CD8-positive, alpha-beta T cell (primary cell): ENCODE measurements at regions of chr12 and their contacts with region 1.

Region 1: GRCh38 chr12:2783936-2784600 is 10.7 kb upstream of the FKBP4 start:
- DNase-seq: peak in 8 of 9 experiments; percentile 29 to 73 (median 54)
- ATAC-seq: peak; percentile 87
- H3K4me3 ChIP-seq: peak overlapping the region; percentile 16
- H3K4me3 Mint-ChIP-seq: peak overlapping the region; percentile 79
- H3K27ac ChIP-seq: no peak overlapping the region
- H3K27ac Mint-ChIP-seq: no peak overlapping the region
- H3K4me1 ChIP-seq: no peaks in the 10 kb centered on the region
- H3K4me1 Mint-ChIP-seq: peaks cover 11% of the 10 kb centered on the region
- H3K27me3 ChIP-seq: peaks cover 0 to 3% of the 10 kb centered on the region in 2 experiments
- H3K27me3 Mint-ChIP-seq: peaks cover 18% of the 10 kb centered on the region
- CTCF ChIP-seq: peak; percentile 97

Region 2: GRCh38 chr12:2248901-2249381 is 535.1 kb before region 1 on chr12:
- CTCF ChIA-PET with region 1: no interaction called
- POLR2A ChIA-PET with region 1: no interaction called
- intact Hi-C with region 1: no loop called
- DNase-seq: peak in 2 of 9 experiments; percentile 14 to 19
- ATAC-seq: no peak
- H3K4me3 ChIP-seq: no peak overlapping the region
- H3K4me3 Mint-ChIP-seq: no peak overlapping the region
- H3K27ac ChIP-seq: no peak overlapping the region
- H3K27ac Mint-ChIP-seq: no peak overlapping the region
- H3K4me1 ChIP-seq: no peaks in the 10 kb centered on the region
- H3K4me1 Mint-ChIP-seq: no peaks in the 10 kb centered on the region
- H3K27me3 ChIP-seq: no peaks in the 10 kb centered on the region
- H3K27me3 Mint-ChIP-seq: peaks cover 12% of the 10 kb centered on the region
- CTCF ChIP-seq: no peak

Region 3: GRCh38 chr12:2682296-2683251 is 101.5 kb before region 1 on chr12:
- CTCF ChIA-PET with region 1: interaction called, 99 read pairs
- POLR2A ChIA-PET with region 1: no interaction called
- intact Hi-C with region 1: loop called (anchors 1 kb)
- DNase-seq: peak in 6 of 9 experiments; percentile 33 to 72 (median 50)
- ATAC-seq: peak; percentile 79
- H3K4me3 ChIP-seq: no peak overlapping the region
- H3K4me3 Mint-ChIP-seq: no peak overlapping the region
- H3K27ac ChIP-seq: no peak overlapping the region
- H3K27ac Mint-ChIP-seq: peak overlapping the region; percentile 66
- H3K4me1 ChIP-seq: no peaks in the 10 kb centered on the region
- H3K4me1 Mint-ChIP-seq: peaks cover 7% of the 10 kb centered on the region
- H3K27me3 ChIP-seq: no peaks in the 10 kb centered on the region
- H3K27me3 Mint-ChIP-seq: no peaks in the 10 kb centered on the region
- CTCF ChIP-seq: peak; percentile 77

Region 4: GRCh38 chr12:2691006-2691344 is 93.1 kb before region 1 on chr12:
- CTCF ChIA-PET with region 1: interaction called, 99 read pairs
- POLR2A ChIA-PET with region 1: no interaction called
- intact Hi-C with region 1: no loop called
- DNase-seq: peak in 8 of 9 experiments; percentile 35 to 86 (median 66)
- ATAC-seq: peak; percentile 75
- H3K4me3 ChIP-seq: peak overlapping the region; percentile 50 to 80
- H3K4me3 Mint-ChIP-seq: peak overlapping the region; percentile 92
- H3K27ac ChIP-seq: peak overlapping the region; percentile 75 to 87
- H3K27ac Mint-ChIP-seq: peak overlapping the region; percentile 90
- H3K4me1 ChIP-seq: peaks cover 30% of the 10 kb centered on the region
- H3K4me1 Mint-ChIP-seq: peaks cover 48% of the 10 kb centered on the region
- H3K27me3 ChIP-seq: no peaks in the 10 kb centered on the region
- H3K27me3 Mint-ChIP-seq: no peaks in the 10 kb centered on the region
- CTCF ChIP-seq: no peak

Region 5: GRCh38 chr12:2801050-2801783 is 17.1 kb after region 1 on chr12:
- CTCF ChIA-PET with region 1: interaction called, 12 read pairs
- POLR2A ChIA-PET with region 1: no interaction called
- intact Hi-C with region 1: no loop called
- DNase-seq: no peak
- ATAC-seq: no peak
- H3K4me3 ChIP-seq: no peak overlapping the region
- H3K4me3 Mint-ChIP-seq: no peak overlapping the region
- H3K27ac ChIP-seq: no peak overlapping the region
- H3K27ac Mint-ChIP-seq: peak overlapping the region; percentile 37
- H3K4me1 ChIP-seq: peaks cover 9% of the 10 kb centered on the region
- H3K4me1 Mint-ChIP-seq: peaks cover 13% of the 10 kb centered on the region
- H3K27me3 ChIP-seq: no peaks in the 10 kb centered on the region
- H3K27me3 Mint-ChIP-seq: no peaks in the 10 kb centered on the region
- CTCF ChIP-seq: no peak